CD14-positive monocyte (primary cell): ENCODE measurements at regions of chr3 and their contacts with region 1.

Region 1: GRCh38 chr3:184543843-184544512 is 17.6 kb upstream of the EPHB3 start:
- DNase-seq: peak; percentile 69 to 80 (median 72)
- H3K4me3 ChIP-seq: no peak overlapping the region
- H3K4me3 Mint-ChIP-seq: no peak overlapping the region
- H3K27ac ChIP-seq: no peak overlapping the region
- H3K27ac Mint-ChIP-seq: peak overlapping the region in 1 of 7 donors; percentile 25
- H3K4me1 ChIP-seq: peaks cover 32 to 45% of the 10 kb centered on the region in 2 donors
- H3K4me1 Mint-ChIP-seq: peaks cover 37% of the 10 kb centered on the region
- H3K27me3 ChIP-seq: peaks cover 0 to 4% of the 10 kb centered on the region in 2 donors
- H3K27me3 Mint-ChIP-seq: peaks cover 5 to 38% (median 30%) of the 10 kb centered on the region in 3 donors
- CTCF ChIP-seq: peak; percentile 82

Region 2: GRCh38 chr3:184371570-184372018 is 172.4 kb before region 1 on chr3:
- intact Hi-C with region 1: loop called (anchors 2 kb)
- DNase-seq: peak; percentile 71 to 80 (median 71)
- H3K4me3 ChIP-seq: no peak overlapping the region
- H3K4me3 Mint-ChIP-seq: no peak overlapping the region
- H3K27ac ChIP-seq: no peak overlapping the region
- H3K27ac Mint-ChIP-seq: no peak overlapping the region
- H3K4me1 ChIP-seq: peaks cover 0 to 6% of the 10 kb centered on the region in 2 donors
- H3K4me1 Mint-ChIP-seq: peaks cover 8% of the 10 kb centered on the region
- H3K27me3 ChIP-seq: peaks cover 0 to 16% of the 10 kb centered on the region in 2 donors
- H3K27me3 Mint-ChIP-seq: peaks cover 16 to 40% (median 29%) of the 10 kb centered on the region in 3 donors
- CTCF ChIP-seq: peak; percentile 95

Region 3: GRCh38 chr3:184417619-184418327 is 126.2 kb before region 1 on chr3:
- intact Hi-C with region 1: loop called (anchors 2 kb)
- DNase-seq: peak; percentile 68 to 78 (median 71)
- H3K4me3 ChIP-seq: no peak overlapping the region
- H3K4me3 Mint-ChIP-seq: no peak overlapping the region
- H3K27ac ChIP-seq: no peak overlapping the region
- H3K27ac Mint-ChIP-seq: no peak overlapping the region
- H3K4me1 ChIP-seq: no peaks in the 10 kb centered on the region
- H3K4me1 Mint-ChIP-seq: peaks cover 2% of the 10 kb centered on the region
- H3K27me3 ChIP-seq: no peaks in the 10 kb centered on the region
- H3K27me3 Mint-ChIP-seq: peaks cover under 1 to 3% (median 2%) of the 10 kb centered on the region in 3 donors
- CTCF ChIP-seq: peak; percentile 95